Common myeloid progenitor, CD34-positive (primary cell): ENCODE measurements at regions of chr12 and their contacts with region 1.

Region 1: GRCh38 chr12:107093417-107094182 is at the start of gene CRY1:
- DNase-seq: peak; percentile 91 to 94 (median 93)
- H3K4me3 ChIP-seq: peak within 1 kb of the TSS; percentile 57 to 93 (median 81)
- H3K27ac ChIP-seq: peak within 1 kb of the TSS; percentile 88 to 95
- H3K4me1 ChIP-seq: peaks cover 10 to 33% (median 23%) of the 10 kb centered on the region in 4 experiments
- H3K27me3 ChIP-seq: no peaks in the 10 kb centered on the region

Region 2: GRCh38 chr12:107079172-107080011 is 14.2 kb before region 1 on chr12:
- CTCF ChIA-PET with region 1: interaction called, 15 read pairs
- POLR2A ChIA-PET with region 1: no interaction called
- DNase-seq: peak; percentile 28 to 51 (median 50)
- H3K4me3 ChIP-seq: no peak overlapping the region
- H3K27ac ChIP-seq: no peak overlapping the region
- H3K4me1 ChIP-seq: peaks cover 0 to 9% (median 5%) of the 10 kb centered on the region in 4 experiments
- H3K27me3 ChIP-seq: no peaks in the 10 kb centered on the region

Region 3: DNA sequence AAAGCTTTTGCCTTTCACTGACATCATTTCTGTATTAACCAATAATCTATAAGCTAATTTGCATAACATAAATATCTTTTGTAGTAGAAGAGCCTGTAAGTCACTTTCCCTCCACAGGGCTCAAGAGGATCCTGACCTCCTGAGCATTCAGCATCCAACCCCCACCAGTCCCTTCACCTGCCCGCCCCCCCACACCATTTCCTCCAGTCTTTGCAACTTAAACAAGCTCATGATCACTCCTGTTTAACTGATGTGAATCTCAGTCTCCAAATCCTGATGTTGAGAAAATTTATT is 11.8 kb after region 1 on chr12:
- CTCF ChIA-PET with region 1: interaction called, 47 read pairs
- POLR2A ChIA-PET with region 1: no interaction called
- DNase-seq: peak in 1 of 3 donors; percentile 28
- H3K4me3 ChIP-seq: no peak overlapping the region
- H3K27ac ChIP-seq: no peak overlapping the region
- H3K4me1 ChIP-seq: no peaks in the 10 kb centered on the region
- H3K27me3 ChIP-seq: peaks cover 0 to 6% (median 0%) of the 10 kb centered on the region in 5 experiments